B cell (primary cell): ENCODE measurements at regions of chr1 and their contacts with region 1.

Region 1: GRCh38 chr1:193537266-193538002 is 351.0 kb upstream of the B3GALT2 start:
- DNase-seq: peak; percentile 87
- ATAC-seq: peak; percentile 94
- H3K4me3 ChIP-seq: peak overlapping the region in 1 of 5 experiments; percentile 37
- H3K4me3 Mint-ChIP-seq: peak overlapping the region; percentile 61
- H3K27ac ChIP-seq: peak overlapping the region; percentile 30 to 42
- H3K27ac Mint-ChIP-seq: peak overlapping the region; percentile 62
- H3K4me1 ChIP-seq: peaks cover 32 to 38% of the 10 kb centered on the region in 2 donors
- H3K4me1 Mint-ChIP-seq: peaks cover 42% of the 10 kb centered on the region
- H3K27me3 ChIP-seq: no peaks in the 10 kb centered on the region
- H3K27me3 Mint-ChIP-seq: no peaks in the 10 kb centered on the region
- CTCF ChIP-seq: no peak

Region 2: GRCh38 chr1:193059268-193060225 is 477.9 kb before region 1 on chr1 and contains the starts of genes RO60 and UCHL5:
- CTCF ChIA-PET with region 1: no interaction called
- POLR2A ChIA-PET with region 1: no interaction called
- intact Hi-C with region 1: loop called (anchors 5 kb)
- DNase-seq: peak; percentile 96
- ATAC-seq: peak; percentile 95
- H3K4me3 ChIP-seq: peak within 1 kb of the TSS; percentile 62 to 99 (median 91)
- H3K4me3 Mint-ChIP-seq: peak within 1 kb of the TSS; percentile 98
- H3K27ac ChIP-seq: peak within 1 kb of the TSS; percentile 89 to 94
- H3K27ac Mint-ChIP-seq: peak within 1 kb of the TSS; percentile 99
- H3K4me1 ChIP-seq: peaks cover 21 to 25% of the 10 kb centered on the region in 2 donors
- H3K4me1 Mint-ChIP-seq: peaks cover 51% of the 10 kb centered on the region
- H3K27me3 ChIP-seq: no peaks in the 10 kb centered on the region
- H3K27me3 Mint-ChIP-seq: no peaks in the 10 kb centered on the region
- CTCF ChIP-seq: no peak
- total RNA-seq, gene RO60: 66.4 and 78.2 TPM in 2 replicates
- total RNA-seq, gene UCHL5: 31.5 and 32.9 TPM in 2 replicates

Region 3: DNA sequence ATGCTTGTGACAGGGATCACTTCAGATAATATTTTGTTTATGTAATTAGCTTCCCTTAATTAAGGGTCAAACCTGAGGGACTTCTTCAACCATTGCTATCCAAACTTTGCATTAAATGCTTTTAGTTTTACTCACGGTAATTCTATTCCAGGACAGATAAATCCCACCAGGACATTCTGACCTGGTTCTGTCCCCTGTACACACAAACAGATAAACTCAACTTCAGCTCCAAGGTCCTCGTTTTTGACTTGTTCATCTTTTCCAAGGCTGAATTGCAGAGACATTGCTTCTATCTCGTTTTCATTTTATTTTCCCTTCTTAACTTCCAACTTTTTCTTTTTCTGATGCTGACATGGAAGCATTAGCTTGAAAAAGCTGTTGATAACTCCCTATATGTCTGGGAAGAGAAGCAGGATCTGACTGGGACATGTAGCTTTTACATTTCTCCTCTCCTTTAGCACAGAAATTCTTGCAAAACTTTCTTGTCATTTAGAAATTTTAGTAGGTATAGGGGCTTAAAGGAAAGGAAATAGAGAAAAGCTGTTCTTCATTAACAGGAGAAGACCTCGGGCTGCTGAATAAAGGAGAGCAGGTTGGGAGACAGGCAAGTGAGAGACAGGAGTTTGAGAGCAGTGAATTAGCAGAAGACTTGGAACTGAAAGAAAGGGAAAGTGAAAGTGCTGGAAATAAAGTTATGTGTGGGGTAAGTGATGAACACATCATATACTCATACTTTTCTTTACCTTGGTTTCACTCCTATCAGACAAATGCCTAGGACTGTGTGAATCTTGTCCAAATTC is 119.3 kb before region 1 on chr1:
- CTCF ChIA-PET with region 1: interaction called, 3 read pairs
- POLR2A ChIA-PET with region 1: no interaction called
- intact Hi-C with region 1: loop called (anchors 5 kb)
- DNase-seq: peak; percentile 51
- ATAC-seq: peak; percentile 54
- H3K4me3 ChIP-seq: peak overlapping the region; percentile 33 to 66 (median 51)
- H3K4me3 Mint-ChIP-seq: peak overlapping the region; percentile 77
- H3K27ac ChIP-seq: peak overlapping the region; percentile 11 to 14
- H3K27ac Mint-ChIP-seq: peak overlapping the region; percentile 12
- H3K4me1 ChIP-seq: peaks cover 12 to 19% of the 10 kb centered on the region in 2 donors
- H3K4me1 Mint-ChIP-seq: peaks cover 23% of the 10 kb centered on the region
- H3K27me3 ChIP-seq: no peaks in the 10 kb centered on the region
- H3K27me3 Mint-ChIP-seq: no peaks in the 10 kb centered on the region
- CTCF ChIP-seq: no peak

Region 4: GRCh38 chr1:193569096-193569982 is 31.9 kb after region 1 on chr1:
- CTCF ChIA-PET with region 1: no interaction called
- POLR2A ChIA-PET with region 1: interaction called, 7 read pairs
- intact Hi-C with region 1: loop called (anchors 2 kb)
- DNase-seq: peak; percentile 8
- ATAC-seq: no peak
- H3K4me3 ChIP-seq: no peak overlapping the region
- H3K4me3 Mint-ChIP-seq: no peak overlapping the region
- H3K27ac ChIP-seq: peak overlapping the region in 1 of 2 donors; percentile 45
- H3K27ac Mint-ChIP-seq: no peak overlapping the region
- H3K4me1 ChIP-seq: peaks cover 4 to 17% of the 10 kb centered on the region in 2 donors
- H3K4me1 Mint-ChIP-seq: peaks cover 21% of the 10 kb centered on the region
- H3K27me3 ChIP-seq: no peaks in the 10 kb centered on the region
- H3K27me3 Mint-ChIP-seq: peaks cover 2% of the 10 kb centered on the region
- CTCF ChIP-seq: no peak

Region 5: GRCh38 chr1:194295685-194296084 is 758.3 kb after region 1 on chr1:
- CTCF ChIA-PET with region 1: no interaction called
- POLR2A ChIA-PET with region 1: no interaction called
- intact Hi-C with region 1: loop called (anchors 2 kb)
- DNase-seq: peak; percentile 77
- ATAC-seq: peak; percentile 93
- H3K4me3 ChIP-seq: no peak overlapping the region
- H3K4me3 Mint-ChIP-seq: no peak overlapping the region
- H3K27ac ChIP-seq: no peak overlapping the region
- H3K27ac Mint-ChIP-seq: no peak overlapping the region
- H3K4me1 ChIP-seq: no peaks in the 10 kb centered on the region
- H3K4me1 Mint-ChIP-seq: peaks cover 9% of the 10 kb centered on the region
- H3K27me3 ChIP-seq: peaks cover 0 to 9% (median 5%) of the 10 kb centered on the region in 4 experiments
- H3K27me3 Mint-ChIP-seq: peaks cover 21% of the 10 kb centered on the region
- CTCF ChIP-seq: peak; percentile 84